ENCODE measurements at regions of chr2 and their contacts with region 1.

Region 1: DNA sequence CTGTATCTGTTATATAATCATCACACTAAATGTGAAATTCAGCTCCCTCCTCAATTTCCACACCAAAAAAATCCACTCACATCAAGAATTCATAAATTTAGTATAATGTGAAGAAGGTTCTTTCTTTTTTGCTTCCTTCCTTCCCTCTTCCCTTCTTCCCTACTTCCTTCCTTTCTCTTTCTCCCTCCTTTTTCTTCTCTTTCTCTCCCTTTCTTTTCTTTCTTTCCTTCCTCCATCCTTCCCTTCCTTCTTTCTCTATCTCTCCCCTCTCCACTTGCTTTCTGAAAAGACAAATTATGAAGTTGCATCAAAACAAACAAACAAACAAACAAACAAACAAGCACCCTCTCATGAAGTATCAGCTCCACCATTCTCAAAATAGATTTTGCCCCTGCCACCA is 290.0 kb downstream of the PDE11A start:
- DNase-seq: no peak
- ATAC-seq: no peak
- H3K4me3 Mint-ChIP-seq: no peak overlapping the region
- H3K27ac Mint-ChIP-seq: peak overlapping the region; percentile 17
- H3K4me1 Mint-ChIP-seq: peaks cover 38% of the 10 kb centered on the region
- H3K27me3 Mint-ChIP-seq: peaks cover 5% of the 10 kb centered on the region

Region 2: DNA sequence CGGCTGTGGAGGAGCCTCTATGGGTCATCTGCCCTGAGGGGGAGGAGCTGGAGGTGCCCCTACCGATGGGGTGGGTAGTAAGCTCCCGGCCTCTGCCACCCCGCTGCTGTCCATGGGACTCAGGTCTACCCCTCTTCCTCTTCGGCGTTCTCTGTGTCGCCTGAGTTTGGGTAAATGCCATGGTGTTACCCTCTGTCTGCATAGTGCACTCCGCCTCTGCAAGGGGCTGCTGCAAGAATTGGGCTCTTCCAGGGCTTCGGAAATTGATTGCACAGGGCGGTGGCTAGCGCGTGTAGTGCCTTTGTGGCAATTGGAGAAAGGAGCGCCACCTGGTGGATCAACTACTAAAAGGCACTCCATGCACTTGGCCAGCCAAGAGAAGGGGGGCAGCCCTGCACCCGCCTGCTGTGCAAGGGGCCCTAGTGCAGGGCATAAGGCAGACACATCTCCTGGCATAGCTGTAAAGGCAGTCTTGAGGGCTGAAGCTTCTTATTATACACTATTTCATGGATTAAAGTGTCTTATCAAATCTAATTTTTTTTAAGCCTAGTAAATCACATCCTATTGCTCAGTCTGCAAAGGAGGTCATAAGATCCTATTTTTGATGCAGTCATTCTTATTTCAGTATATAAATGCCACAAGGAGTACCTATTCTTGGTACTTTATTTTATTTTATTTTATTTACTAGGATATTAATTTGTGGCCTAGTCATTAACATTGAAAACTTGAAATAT is 18.9 kb before region 1 on chr2:
- CTCF ChIA-PET with region 1: interaction called, 10 read pairs
- POLR2A ChIA-PET with region 1: no interaction called
- DNase-seq: peak; percentile 88
- ATAC-seq: peak; percentile 99
- H3K4me3 Mint-ChIP-seq: no peak overlapping the region
- H3K27ac Mint-ChIP-seq: no peak overlapping the region
- H3K4me1 Mint-ChIP-seq: peaks cover 3% of the 10 kb centered on the region
- H3K27me3 Mint-ChIP-seq: peaks cover 17% of the 10 kb centered on the region

Region 3: DNA sequence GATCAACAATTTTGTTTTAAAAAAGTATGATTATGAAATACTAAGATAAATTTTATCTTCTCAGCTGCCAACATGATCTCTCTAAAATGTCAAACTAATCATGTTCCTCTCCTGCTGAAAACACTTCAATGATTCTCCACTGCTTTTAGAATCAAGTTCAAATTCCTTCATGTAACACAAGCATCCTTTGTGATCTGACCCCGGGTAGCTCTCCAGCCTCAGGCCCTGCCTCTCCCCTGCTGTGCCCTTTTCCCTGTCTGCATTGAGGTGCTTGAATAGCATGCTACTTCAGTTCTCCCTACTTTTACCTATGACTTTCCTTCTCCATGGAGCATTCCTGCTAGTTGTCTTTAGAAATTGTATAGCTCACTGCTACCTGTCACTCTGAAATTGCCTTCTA is 15.2 kb after region 1 on chr2:
- CTCF ChIA-PET with region 1: no interaction called
- POLR2A ChIA-PET with region 1: no interaction called
- DNase-seq: no peak
- ATAC-seq: no peak
- H3K4me3 Mint-ChIP-seq: no peak overlapping the region
- H3K27ac Mint-ChIP-seq: no peak overlapping the region
- H3K4me1 Mint-ChIP-seq: no peaks in the 10 kb centered on the region
- H3K27me3 Mint-ChIP-seq: peaks cover 24% of the 10 kb centered on the region

Measured in activated CD8-positive, alpha-beta T cell treated with anti-CD3 and anti-CD28 coated beads, Interleukin-2, amount 10 ng/mL, durations not matched to agents 7 days and 5 days (primary cell).